Ovary (tissue), 10 donors: ENCODE measurements at regions of chr14 and their contacts with region 1.

Region 1: DNA sequence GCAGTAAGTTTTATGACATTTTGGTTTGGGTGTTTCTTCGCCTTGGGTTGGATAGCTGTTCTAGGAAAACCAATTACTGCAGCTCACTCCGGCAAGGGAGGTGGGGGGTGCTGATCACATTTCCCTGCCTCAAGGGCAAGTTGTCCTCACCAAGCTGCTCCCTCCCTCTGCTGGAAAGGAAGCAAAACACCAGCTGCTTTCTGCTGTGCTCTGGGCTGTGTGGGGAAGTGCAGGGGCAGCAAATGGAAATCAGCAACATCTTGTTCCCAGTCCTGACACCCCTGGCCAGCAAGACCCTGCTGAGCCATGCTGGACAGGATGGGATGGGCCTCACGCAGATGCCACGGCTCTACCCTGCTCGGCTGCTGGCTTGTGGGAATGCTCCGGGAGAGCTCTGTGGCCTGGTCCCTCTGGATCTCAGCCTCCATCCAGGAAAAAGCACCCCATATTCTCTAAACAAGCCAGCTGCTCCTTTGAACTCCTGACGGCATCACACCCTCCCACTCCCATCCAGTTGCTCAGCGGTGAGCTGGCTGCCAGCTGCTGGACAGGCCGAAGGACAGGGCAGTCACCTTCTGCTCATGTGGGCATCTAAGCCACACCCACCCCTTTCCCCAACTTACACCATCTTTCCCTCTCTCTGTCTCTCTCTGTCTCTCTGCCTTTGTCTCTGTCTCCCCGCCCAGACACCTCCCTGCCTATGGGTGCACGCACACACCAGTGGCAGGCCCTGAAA is 52.4 kb upstream of the EIF5 start:
- DNase-seq: peak; percentile 69 to 80 (median 76)
- H3K4me3 ChIP-seq: no peak overlapping the region
- H3K27ac ChIP-seq: no peak overlapping the region
- H3K4me1 ChIP-seq: peaks cover 13% of the 10 kb centered on the region
- H3K27me3 ChIP-seq: no peaks in the 10 kb centered on the region
- CTCF ChIP-seq: peak in 2 of 3 donors; percentile 35 to 79
- EP300 ChIP-seq: no peak
- POLR2A ChIP-seq: no peak

Region 2: GRCh38 chr14:103185051-103185992 is 96.3 kb before region 1 on chr14:
- intact Hi-C with region 1: loop called in 1 of 4 experiments (anchors 5 kb)
- DNase-seq: no peak
- H3K4me3 ChIP-seq: no peak overlapping the region
- H3K27ac ChIP-seq: no peak overlapping the region
- H3K4me1 ChIP-seq: peaks cover 2% of the 10 kb centered on the region
- H3K27me3 ChIP-seq: no peaks in the 10 kb centered on the region
- CTCF ChIP-seq: peak; percentile 19 to 69 (median 64)
- EP300 ChIP-seq: no peak
- POLR2A ChIP-seq: no peak

Region 3: DNA sequence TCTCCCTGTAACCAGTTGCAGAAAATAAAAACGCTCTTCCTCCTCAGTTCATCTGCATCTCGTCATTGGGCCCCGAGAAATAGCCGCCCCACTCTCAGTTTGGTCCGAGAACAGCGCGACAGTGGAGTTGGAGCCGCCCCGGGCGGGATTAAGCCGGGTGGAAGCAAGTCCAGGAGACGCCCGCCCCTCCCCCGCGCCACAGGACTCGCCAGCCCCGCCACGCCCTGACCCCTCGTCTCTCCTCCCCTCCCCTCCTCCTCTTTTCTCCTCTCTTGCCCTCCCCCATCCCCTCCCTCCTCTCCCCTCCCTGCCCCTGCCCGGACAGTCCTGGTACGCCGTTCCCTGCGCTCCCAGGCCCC is 74.7 kb before region 1 on chr14:
- intact Hi-C with region 1: loop called in 1 of 4 experiments (anchors 5 kb)
- DNase-seq: peak; percentile 87 to 93 (median 92)
- H3K4me3 ChIP-seq: peak overlapping the region; percentile 72
- H3K27ac ChIP-seq: peak overlapping the region; percentile 83 to 91
- H3K4me1 ChIP-seq: peaks cover 12% of the 10 kb centered on the region
- H3K27me3 ChIP-seq: no peaks in the 10 kb centered on the region
- CTCF ChIP-seq: no peak
- EP300 ChIP-seq: no peak
- POLR2A ChIP-seq: no peak

Region 4: DNA sequence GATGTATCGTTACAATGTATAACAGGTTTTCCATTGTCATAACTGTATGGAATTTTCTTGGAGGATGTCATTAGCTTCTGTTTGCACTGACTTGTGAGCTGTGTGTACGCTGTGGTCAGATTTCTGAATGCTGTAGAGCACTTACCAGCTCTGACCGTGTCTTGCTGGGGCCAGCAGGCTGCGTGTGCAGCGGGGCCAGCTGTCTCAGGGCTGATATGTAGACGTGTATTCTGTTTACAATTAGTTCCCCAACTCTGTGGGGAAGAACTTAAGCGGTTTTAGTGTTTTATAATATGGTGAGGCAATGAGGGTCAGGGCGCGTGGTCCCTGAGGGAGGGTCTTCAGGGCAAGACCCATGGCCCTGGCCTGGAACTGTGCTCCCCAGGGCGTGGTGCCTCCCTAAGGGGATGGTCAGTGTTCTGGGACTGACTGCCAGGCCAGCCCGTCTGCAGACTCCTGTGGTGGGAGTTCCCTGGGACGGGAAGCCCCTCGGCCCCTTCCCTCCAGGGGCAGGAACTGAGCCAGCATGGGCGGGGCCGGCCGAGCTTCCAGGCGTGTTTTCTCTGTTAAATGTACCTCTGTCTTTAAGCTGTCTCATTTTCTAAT is 414.9 kb after region 1 on chr14:
- intact Hi-C with region 1: no loop called
- DNase-seq: peak in 3 of 5 donors; percentile 62 to 83 (median 69)
- H3K4me3 ChIP-seq: no peak overlapping the region
- H3K27ac ChIP-seq: peak overlapping the region in 1 of 2 donors; percentile 58
- H3K4me1 ChIP-seq: peaks cover 22% of the 10 kb centered on the region
- H3K27me3 ChIP-seq: no peaks in the 10 kb centered on the region
- CTCF ChIP-seq: no peak
- EP300 ChIP-seq: no peak
- POLR2A ChIP-seq: no peak